ENCODE measurements at regions of chr7 and their contacts with region 1.

Region 1: GRCh38 chr7:143372070-143372469 is 9.1 kb upstream of the ZYX start:
- DNase-seq: peak; percentile 66
- H3K4me3 Mint-ChIP-seq: no peak overlapping the region
- H3K27ac Mint-ChIP-seq: peak overlapping the region; percentile 80
- H3K4me1 Mint-ChIP-seq: peaks cover 55% of the 10 kb centered on the region
- H3K27me3 Mint-ChIP-seq: no peaks in the 10 kb centered on the region

Region 2: GRCh38 chr7:143263266-143264195 is 108.5 kb before region 1 on chr7 and contains the start of gene GSTK1:
- CTCF ChIA-PET with region 1: no interaction called
- POLR2A ChIA-PET with region 1: interaction called, 11 read pairs
- DNase-seq: peak; percentile 86
- H3K4me3 Mint-ChIP-seq: peak within 1 kb of the TSS; percentile 97
- H3K27ac Mint-ChIP-seq: peak within 1 kb of the TSS; percentile 87
- H3K4me1 Mint-ChIP-seq: peaks cover 73% of the 10 kb centered on the region
- H3K27me3 Mint-ChIP-seq: no peaks in the 10 kb centered on the region
- total RNA-seq, gene GSTK1: 502 to 518 TPM

Region 3: GRCh38 chr7:143305423-143306070 is 66.5 kb before region 1 on chr7:
- CTCF ChIA-PET with region 1: interaction called, 6 read pairs
- POLR2A ChIA-PET with region 1: interaction called, 12 read pairs
- DNase-seq: peak; percentile 76
- H3K4me3 Mint-ChIP-seq: no peak overlapping the region
- H3K27ac Mint-ChIP-seq: peak overlapping the region; percentile 61
- H3K4me1 Mint-ChIP-seq: peaks cover 75% of the 10 kb centered on the region
- H3K27me3 Mint-ChIP-seq: no peaks in the 10 kb centered on the region

Region 4: GRCh38 chr7:143345428-143345900 is 26.6 kb before region 1 on chr7:
- CTCF ChIA-PET with region 1: interaction called, 12 read pairs
- POLR2A ChIA-PET with region 1: interaction called, 3 read pairs
- DNase-seq: peak; percentile 75
- H3K4me3 Mint-ChIP-seq: peak overlapping the region; percentile 59
- H3K27ac Mint-ChIP-seq: no peak overlapping the region
- H3K4me1 Mint-ChIP-seq: peaks cover 11% of the 10 kb centered on the region
- H3K27me3 Mint-ChIP-seq: peaks cover 33% of the 10 kb centered on the region

Region 5: GRCh38 chr7:143360788-143361551 is 11.1 kb before region 1 on chr7:
- CTCF ChIA-PET with region 1: interaction called, 4 read pairs
- POLR2A ChIA-PET with region 1: interaction called, 10 read pairs
- DNase-seq: no peak
- H3K4me3 Mint-ChIP-seq: peak overlapping the region; percentile 56
- H3K27ac Mint-ChIP-seq: no peak overlapping the region
- H3K4me1 Mint-ChIP-seq: peaks cover 10% of the 10 kb centered on the region
- H3K27me3 Mint-ChIP-seq: peaks cover 58% of the 10 kb centered on the region

Region 6: GRCh38 chr7:143385891-143386781 is 14.1 kb after region 1 on chr7:
- CTCF ChIA-PET with region 1: interaction called, 14 read pairs
- POLR2A ChIA-PET with region 1: interaction called, 10 read pairs
- DNase-seq: peak; percentile 64
- H3K4me3 Mint-ChIP-seq: no peak overlapping the region
- H3K27ac Mint-ChIP-seq: no peak overlapping the region
- H3K4me1 Mint-ChIP-seq: peaks cover 21% of the 10 kb centered on the region
- H3K27me3 Mint-ChIP-seq: no peaks in the 10 kb centered on the region

Region 7: GRCh38 chr7:143416565-143417149 is 44.6 kb after region 1 on chr7:
- CTCF ChIA-PET with region 1: interaction called, 11 read pairs
- POLR2A ChIA-PET with region 1: no interaction called
- DNase-seq: peak; percentile 13
- H3K4me3 Mint-ChIP-seq: no peak overlapping the region
- H3K27ac Mint-ChIP-seq: no peak overlapping the region
- H3K4me1 Mint-ChIP-seq: no peaks in the 10 kb centered on the region
- H3K27me3 Mint-ChIP-seq: peaks cover 3% of the 10 kb centered on the region

Region 8: DNA sequence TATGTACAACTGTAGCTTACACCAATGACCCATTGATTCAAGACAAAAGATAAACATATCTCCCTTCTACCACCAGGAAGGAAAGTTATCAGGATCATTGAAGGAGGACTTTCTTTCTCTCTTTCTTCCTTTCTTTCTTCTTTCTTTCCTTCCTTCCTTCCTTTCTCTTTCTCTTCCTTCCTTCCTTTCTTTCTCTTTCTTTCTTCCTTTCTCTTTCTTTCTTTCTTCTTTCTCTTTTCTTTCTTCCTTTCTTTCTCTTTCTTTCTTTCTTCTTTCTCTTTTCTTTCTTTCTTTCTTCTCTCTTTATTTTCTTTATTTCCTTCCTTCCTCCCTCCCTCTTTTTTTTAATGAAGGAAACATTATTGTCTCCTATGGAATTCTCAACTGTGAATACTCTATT is 726.7 kb after region 1 on chr7:
- CTCF ChIA-PET with region 1: no interaction called
- POLR2A ChIA-PET with region 1: no interaction called
- DNase-seq: no peak
- H3K4me3 Mint-ChIP-seq: no peak overlapping the region
- H3K27ac Mint-ChIP-seq: no peak overlapping the region
- H3K4me1 Mint-ChIP-seq: no peaks in the 10 kb centered on the region
- H3K27me3 Mint-ChIP-seq: peaks cover 3% of the 10 kb centered on the region